ENCODE measurements at regions of chr1 and their contacts with region 1.

Region 1: GRCh38 chr1:33072707-33073106 is 8.2 kb upstream of the AZIN2 start:
- H3K4me3 ChIP-seq: no peak overlapping the region
- H3K27ac ChIP-seq: no peak overlapping the region
- H3K4me1 ChIP-seq: no peaks in the 10 kb centered on the region
- CTCF ChIP-seq: no peak

Region 2: GRCh38 chr1:33086384-33086850 is 13.7 kb after region 1 on chr1:
- CTCF ChIA-PET with region 1: interaction called, 11 read pairs
- POLR2A ChIA-PET with region 1: no interaction called
- H3K4me3 ChIP-seq: no peak overlapping the region
- H3K27ac ChIP-seq: no peak overlapping the region
- H3K4me1 ChIP-seq: no peaks in the 10 kb centered on the region
- CTCF ChIP-seq: peak; percentile 78

Region 3: DNA sequence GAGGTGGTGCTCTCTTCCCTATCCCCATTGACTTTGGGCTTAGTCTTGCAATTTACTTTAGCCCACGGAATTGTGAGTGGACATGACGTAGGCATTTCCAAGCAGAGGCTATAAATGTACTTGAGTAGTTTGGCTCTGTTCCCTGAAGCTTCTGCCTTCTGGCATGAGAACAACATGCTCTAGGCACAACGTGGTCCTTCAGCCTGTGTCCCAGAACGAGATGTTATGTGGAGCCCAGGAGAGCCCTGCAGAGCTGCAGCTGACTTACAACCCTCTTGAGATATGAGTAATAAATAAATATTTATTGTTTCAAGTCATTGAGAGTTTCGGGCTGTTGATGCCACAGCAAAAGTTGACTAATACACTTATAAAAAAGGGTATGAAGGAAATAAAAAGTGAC is 686.0 kb after region 1 on chr1:
- CTCF ChIA-PET with region 1: no interaction called
- POLR2A ChIA-PET with region 1: no interaction called
- H3K4me3 ChIP-seq: no peak overlapping the region
- H3K27ac ChIP-seq: no peak overlapping the region
- H3K4me1 ChIP-seq: no peaks in the 10 kb centered on the region
- CTCF ChIP-seq: no peak